ENCODE measurements at regions of chr3 and their contacts with region 1.

Region 1: DNA sequence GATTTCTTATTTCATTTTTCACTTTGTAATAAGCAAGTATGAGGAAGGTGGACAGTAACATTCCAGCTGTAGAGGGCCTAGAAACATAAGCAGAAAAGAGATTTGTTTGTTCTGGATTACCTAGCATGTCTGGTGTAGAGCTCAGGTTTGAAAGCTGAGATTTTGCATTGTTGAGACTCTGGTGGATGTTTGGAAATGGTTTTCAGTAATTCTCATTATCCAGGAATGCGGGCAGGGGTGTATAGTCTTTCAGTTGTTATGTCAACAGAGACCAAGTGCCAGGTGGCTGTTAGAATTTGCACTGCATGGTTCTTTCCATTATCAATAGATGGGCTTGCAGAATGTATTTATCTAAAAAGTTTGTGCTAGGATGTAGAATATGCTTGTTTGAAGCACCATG is 10.9 kb downstream of the GPD1L start:
- DNase-seq: no peak
- ATAC-seq: no peak
- H3K4me3 ChIP-seq: no peak overlapping the region
- H3K4me3 Mint-ChIP-seq: no peak overlapping the region
- H3K27ac ChIP-seq: no peak overlapping the region
- H3K27ac Mint-ChIP-seq: no peak overlapping the region
- H3K4me1 ChIP-seq: peaks cover 39% of the 10 kb centered on the region
- H3K4me1 Mint-ChIP-seq: peaks cover 74% of the 10 kb centered on the region
- H3K27me3 ChIP-seq: no peaks in the 10 kb centered on the region
- H3K27me3 Mint-ChIP-seq: no peaks in the 10 kb centered on the region
- CTCF ChIP-seq: no peak

Region 2: GRCh38 chr3:31219131-31219843 is 898.0 kb before region 1 on chr3:
- CTCF ChIA-PET with region 1: no interaction called
- POLR2A ChIA-PET with region 1: no interaction called
- intact Hi-C with region 1: loop called in 1 of 2 experiments (anchors 10 kb)
- DNase-seq: no peak
- ATAC-seq: no peak
- H3K4me3 ChIP-seq: no peak overlapping the region
- H3K4me3 Mint-ChIP-seq: no peak overlapping the region
- H3K27ac ChIP-seq: no peak overlapping the region
- H3K27ac Mint-ChIP-seq: no peak overlapping the region
- H3K4me1 ChIP-seq: peaks cover 57% of the 10 kb centered on the region
- H3K4me1 Mint-ChIP-seq: peaks cover 91% of the 10 kb centered on the region
- H3K27me3 ChIP-seq: no peaks in the 10 kb centered on the region
- H3K27me3 Mint-ChIP-seq: no peaks in the 10 kb centered on the region
- CTCF ChIP-seq: no peak

Region 3: GRCh38 chr3:31544634-31545033 is 572.7 kb before region 1 on chr3:
- CTCF ChIA-PET with region 1: no interaction called
- POLR2A ChIA-PET with region 1: no interaction called
- intact Hi-C with region 1: loop called in 1 of 2 experiments (anchors 5 kb)
- DNase-seq: no peak
- ATAC-seq: no peak
- H3K4me3 ChIP-seq: no peak overlapping the region
- H3K4me3 Mint-ChIP-seq: peak overlapping the region; percentile 9
- H3K27ac ChIP-seq: no peak overlapping the region
- H3K27ac Mint-ChIP-seq: peak overlapping the region; percentile 21
- H3K4me1 ChIP-seq: peaks cover 66% of the 10 kb centered on the region
- H3K4me1 Mint-ChIP-seq: peaks cover 86% of the 10 kb centered on the region
- H3K27me3 ChIP-seq: no peaks in the 10 kb centered on the region
- H3K27me3 Mint-ChIP-seq: no peaks in the 10 kb centered on the region
- CTCF ChIP-seq: no peak

Region 4: DNA sequence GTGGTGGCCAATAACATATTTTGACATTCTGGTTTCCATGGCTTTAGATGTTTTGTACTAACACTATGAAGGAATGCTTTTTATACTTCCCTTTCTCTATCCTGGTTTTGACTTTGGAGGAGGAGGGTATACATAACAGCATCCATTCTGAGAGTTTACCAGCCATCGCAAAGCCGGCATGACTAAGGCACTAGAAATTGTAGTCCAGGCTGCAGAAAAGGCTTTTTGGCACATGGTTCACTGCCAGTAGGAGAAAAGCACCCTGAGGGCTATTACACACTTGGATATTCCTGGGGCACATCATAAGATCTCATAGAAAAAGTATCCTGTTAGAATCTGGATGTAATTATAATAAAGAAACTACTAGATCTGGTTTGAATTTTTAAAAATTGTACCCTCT is 482.8 kb before region 1 on chr3:
- CTCF ChIA-PET with region 1: no interaction called
- POLR2A ChIA-PET with region 1: no interaction called
- intact Hi-C with region 1: loop called in 1 of 2 experiments (anchors 10 kb)
- DNase-seq: no peak
- ATAC-seq: no peak
- H3K4me3 ChIP-seq: no peak overlapping the region
- H3K4me3 Mint-ChIP-seq: no peak overlapping the region
- H3K27ac ChIP-seq: no peak overlapping the region
- H3K27ac Mint-ChIP-seq: peak overlapping the region; percentile 39
- H3K4me1 ChIP-seq: peaks cover 42% of the 10 kb centered on the region
- H3K4me1 Mint-ChIP-seq: peaks cover 46% of the 10 kb centered on the region
- H3K27me3 ChIP-seq: no peaks in the 10 kb centered on the region
- H3K27me3 Mint-ChIP-seq: no peaks in the 10 kb centered on the region
- CTCF ChIP-seq: no peak

Region 5: DNA sequence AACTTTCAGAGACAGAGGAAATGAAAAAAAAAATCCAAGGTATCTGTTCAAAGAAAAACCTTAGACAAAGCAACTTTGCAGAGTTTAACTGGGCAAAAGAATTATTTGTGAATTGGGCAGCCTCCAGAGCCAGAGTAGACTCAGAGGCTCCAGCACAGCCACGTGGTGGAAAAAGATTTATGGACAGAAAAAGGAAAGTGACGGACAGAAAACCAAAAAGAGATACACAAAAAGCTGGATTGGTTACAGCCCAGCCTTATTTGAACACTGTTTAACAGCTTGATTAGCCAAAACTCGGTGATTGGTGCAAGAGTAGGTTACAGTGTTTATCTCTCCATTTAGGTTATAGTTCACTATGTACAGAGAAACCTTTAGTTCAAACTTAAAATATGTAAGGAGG is 34.6 kb before region 1 on chr3:
- CTCF ChIA-PET with region 1: no interaction called
- POLR2A ChIA-PET with region 1: no interaction called
- intact Hi-C with region 1: no loop called
- DNase-seq: no peak
- ATAC-seq: no peak
- H3K4me3 ChIP-seq: no peak overlapping the region
- H3K4me3 Mint-ChIP-seq: no peak overlapping the region
- H3K27ac ChIP-seq: no peak overlapping the region
- H3K27ac Mint-ChIP-seq: no peak overlapping the region
- H3K4me1 ChIP-seq: no peaks in the 10 kb centered on the region
- H3K4me1 Mint-ChIP-seq: no peaks in the 10 kb centered on the region
- H3K27me3 ChIP-seq: no peaks in the 10 kb centered on the region
- H3K27me3 Mint-ChIP-seq: peaks cover 6% of the 10 kb centered on the region
- CTCF ChIP-seq: no peak

Region 6: DNA sequence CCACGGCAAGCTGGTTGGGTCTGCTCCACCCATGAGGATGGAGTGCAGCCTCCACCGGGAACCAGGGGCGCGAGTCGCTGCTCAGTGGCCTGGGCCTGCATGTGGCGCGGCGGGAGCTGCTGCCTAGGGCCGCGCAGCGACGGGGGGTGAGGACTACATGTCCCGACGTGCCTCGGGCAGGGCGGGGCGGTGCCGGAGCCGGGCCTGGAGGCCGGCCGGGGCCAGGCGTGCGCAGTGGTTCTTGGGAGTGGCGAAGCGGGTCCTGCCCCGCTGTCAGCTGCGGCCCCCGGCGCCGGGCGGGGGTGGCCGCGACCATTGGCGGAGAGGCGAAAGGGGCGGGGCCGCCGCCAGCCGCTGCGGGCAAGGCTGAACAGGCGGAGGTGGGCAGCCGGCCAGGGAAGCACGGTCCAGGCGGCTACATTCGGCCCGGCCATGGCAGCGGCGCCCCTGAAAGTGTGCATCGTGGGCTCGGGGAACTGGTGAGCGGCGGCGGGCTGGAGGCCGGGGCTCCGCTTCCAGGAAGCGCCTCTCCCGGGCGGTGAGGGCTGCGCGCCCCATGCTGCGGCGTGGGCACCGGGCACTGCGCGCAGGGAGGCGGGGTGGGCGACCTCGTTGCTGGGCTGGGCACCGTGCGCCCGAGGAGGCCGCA is 10.9 kb before region 1 on chr3 and contains the start of gene GPD1L:
- CTCF ChIA-PET with region 1: interaction called, 9 read pairs
- POLR2A ChIA-PET with region 1: interaction called, 17 read pairs
- intact Hi-C with region 1: loop called (anchors 1 kb)
- DNase-seq: peak; percentile 84 to 95 (median 90)
- ATAC-seq: peak; percentile 97
- H3K4me3 ChIP-seq: peak within 1 kb of the TSS; percentile 70 to 80
- H3K4me3 Mint-ChIP-seq: peak within 1 kb of the TSS; percentile 91
- H3K27ac ChIP-seq: peak within 1 kb of the TSS; percentile 46 to 57
- H3K27ac Mint-ChIP-seq: peak within 1 kb of the TSS; percentile 67
- H3K4me1 ChIP-seq: peaks cover 13% of the 10 kb centered on the region
- H3K4me1 Mint-ChIP-seq: peaks cover 33% of the 10 kb centered on the region
- H3K27me3 ChIP-seq: no peaks in the 10 kb centered on the region
- H3K27me3 Mint-ChIP-seq: no peaks in the 10 kb centered on the region
- CTCF ChIP-seq: no peak
- total RNA-seq, gene GPD1L: 9.5 to 9.8 TPM